ENCODE measurements at regions of chr3 and their contacts with region 1.

Region 1: DNA sequence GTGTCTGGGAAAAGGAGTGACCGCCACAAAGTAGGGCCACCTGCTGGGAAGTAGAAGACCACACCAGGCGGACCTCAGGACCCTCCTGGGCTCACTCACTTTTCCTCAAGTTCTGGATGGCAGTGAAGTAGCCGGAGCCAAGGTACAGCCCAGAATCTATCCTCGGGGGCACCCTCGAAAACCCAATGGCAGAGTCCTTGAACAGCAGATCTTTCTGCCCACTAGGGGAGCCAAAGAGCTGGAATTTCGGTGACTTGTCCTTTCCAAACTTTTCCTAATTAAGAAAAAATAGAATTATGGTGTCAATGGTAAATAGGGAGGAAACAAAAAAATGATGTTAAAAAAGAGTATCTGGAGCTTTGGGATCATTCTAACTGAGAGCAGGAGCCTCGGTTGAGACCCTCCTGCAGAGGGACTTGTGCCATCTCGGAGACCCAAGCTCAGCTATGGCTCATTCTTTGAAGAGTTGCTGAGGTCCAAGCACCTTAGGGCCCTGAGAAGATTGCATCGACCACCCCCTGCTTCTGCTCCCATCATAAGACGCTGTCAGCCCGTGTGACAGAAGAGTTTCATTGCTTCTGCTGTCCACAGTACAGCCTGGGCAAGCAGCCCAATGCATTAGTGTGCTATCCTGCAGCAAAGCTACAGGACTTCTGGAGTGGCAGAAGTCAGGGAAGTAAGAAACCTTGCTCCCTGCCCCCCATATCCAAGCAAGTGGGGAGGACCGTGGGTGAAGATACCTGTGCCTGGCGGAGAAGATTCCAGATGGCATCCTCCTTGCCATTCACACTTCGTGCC is 14.8 kb downstream of the LTF start:
- DNase-seq: peak; percentile 50
- ATAC-seq: peak; percentile 64
- H3K4me3 Mint-ChIP-seq: no peak overlapping the region
- H3K27ac Mint-ChIP-seq: no peak overlapping the region
- H3K4me1 Mint-ChIP-seq: no peaks in the 10 kb centered on the region
- H3K27me3 Mint-ChIP-seq: no peaks in the 10 kb centered on the region; the same call in 1 of the 2 replicates
- CTCF ChIP-seq: peak; percentile 73

Region 2: DNA sequence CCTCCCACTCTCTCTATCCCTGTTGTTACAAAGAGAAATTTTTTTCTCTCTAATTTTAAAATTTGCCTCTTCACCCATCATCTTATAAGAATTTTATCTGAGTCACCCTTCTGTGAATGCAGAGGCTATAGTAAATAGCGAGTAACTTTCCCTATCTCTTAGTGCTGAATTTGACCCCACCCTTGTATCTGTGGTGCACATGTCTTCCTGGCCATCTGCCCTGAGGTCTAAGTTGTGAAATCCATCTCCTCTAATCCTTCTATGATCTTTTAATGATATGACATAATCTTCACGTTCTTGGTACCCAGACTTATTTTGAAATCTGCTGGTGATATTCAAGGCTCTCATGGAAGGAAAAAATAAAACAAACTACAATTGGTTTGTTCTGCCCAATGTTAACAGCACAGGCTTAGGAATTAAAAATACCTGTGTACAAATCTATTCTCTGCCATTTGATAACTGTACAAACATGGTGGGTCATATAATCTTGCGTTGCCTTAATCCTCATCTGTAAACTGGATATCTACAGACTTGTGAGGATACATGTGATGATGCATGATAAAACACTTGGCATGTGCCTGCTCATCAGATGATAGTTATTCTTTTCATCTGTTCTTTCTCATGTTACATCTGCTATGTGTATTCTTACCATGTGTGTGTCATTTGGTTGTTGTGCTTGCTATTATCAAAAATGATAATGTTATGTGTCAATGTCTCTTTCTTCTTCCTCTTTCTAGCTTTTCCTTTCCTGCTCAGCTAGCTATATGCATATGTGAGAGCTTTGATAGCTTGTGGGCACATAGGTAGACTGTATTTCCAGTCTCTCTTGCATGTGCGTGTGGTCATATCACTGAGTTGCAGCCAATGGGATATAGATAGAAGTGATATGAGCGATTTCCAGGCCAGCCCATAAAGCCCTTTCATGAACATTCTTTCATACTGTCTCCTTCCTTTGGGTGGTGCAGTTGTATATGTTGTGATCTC is 221.4 kb before region 1 on chr3:
- CTCF ChIA-PET with region 1: no interaction called
- POLR2A ChIA-PET with region 1: no interaction called
- DNase-seq: no peak
- ATAC-seq: no peak
- H3K4me3 Mint-ChIP-seq: no peak overlapping the region
- H3K27ac Mint-ChIP-seq: no peak overlapping the region
- H3K4me1 Mint-ChIP-seq: no peaks in the 10 kb centered on the region
- H3K27me3 Mint-ChIP-seq: no peaks in the 10 kb centered on the region; the same call in 1 of the 2 replicates
- CTCF ChIP-seq: no peak

Region 3: DNA sequence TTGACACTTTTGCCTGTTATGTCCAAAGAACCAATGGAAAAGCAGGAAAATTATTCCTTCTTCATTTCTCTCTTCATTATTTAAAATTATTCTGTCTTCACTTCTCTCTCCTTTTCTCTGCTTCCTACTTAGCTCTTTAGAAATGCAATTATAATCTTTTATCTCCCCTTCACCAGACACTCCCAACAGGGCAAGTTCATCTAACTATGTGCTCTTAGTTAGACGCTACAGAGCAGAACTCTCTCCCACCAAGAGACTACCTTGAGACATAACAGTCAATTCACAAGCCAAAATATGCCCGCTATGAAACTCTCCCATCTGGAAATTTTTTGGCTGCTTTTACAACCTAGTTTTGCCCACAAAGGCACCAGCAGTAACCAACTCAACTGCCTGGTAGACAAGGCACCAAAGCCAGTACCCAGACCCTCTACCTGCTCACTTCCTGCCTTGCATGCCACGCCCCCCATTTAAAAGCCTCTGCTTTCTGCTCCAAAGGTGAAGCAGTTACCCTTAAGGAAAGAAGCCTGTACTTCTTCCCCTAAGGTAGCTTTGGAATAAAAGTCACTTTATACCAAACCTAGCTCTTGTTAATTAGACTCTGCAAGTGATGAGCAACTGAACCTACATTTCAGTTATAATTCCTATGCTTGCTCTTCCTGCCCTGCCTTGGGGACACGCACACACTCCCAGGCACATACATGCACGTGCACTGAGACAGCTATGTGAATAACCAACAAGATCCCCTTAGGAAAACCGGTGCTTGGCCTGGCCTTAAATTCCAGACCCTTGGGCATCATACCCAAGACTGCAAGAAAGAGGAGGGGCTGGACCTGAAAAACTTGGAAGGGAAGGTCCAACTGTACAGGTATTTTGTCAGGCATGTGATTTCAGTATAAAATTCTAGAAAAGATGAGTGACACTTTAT is 14.6 kb before region 1 on chr3:
- CTCF ChIA-PET with region 1: interaction called, 10 read pairs
- POLR2A ChIA-PET with region 1: no interaction called
- DNase-seq: no peak
- ATAC-seq: peak; percentile 34; the same call in 1 of the 2 replicates
- H3K4me3 Mint-ChIP-seq: no peak overlapping the region
- H3K27ac Mint-ChIP-seq: no peak overlapping the region
- H3K4me1 Mint-ChIP-seq: peaks cover 3% of the 10 kb centered on the region
- H3K27me3 Mint-ChIP-seq: peaks cover 6% of the 10 kb centered on the region; the same call in 1 of the 2 replicates
- CTCF ChIP-seq: no peak

Region 4: GRCh38 chr3:46462111-46462510 is 12.2 kb after region 1 on chr3:
- CTCF ChIA-PET with region 1: interaction called, 65 read pairs
- POLR2A ChIA-PET with region 1: no interaction called
- DNase-seq: no peak
- ATAC-seq: peak; percentile 63
- H3K4me3 Mint-ChIP-seq: no peak overlapping the region
- H3K27ac Mint-ChIP-seq: no peak overlapping the region
- H3K4me1 Mint-ChIP-seq: peaks cover 3% of the 10 kb centered on the region
- H3K27me3 Mint-ChIP-seq: peaks cover 42% of the 10 kb centered on the region
- CTCF ChIP-seq: no peak

Region 5: GRCh38 chr3:46472736-46473135 is 22.8 kb after region 1 on chr3:
- CTCF ChIA-PET with region 1: interaction called, 10 read pairs
- POLR2A ChIA-PET with region 1: no interaction called
- DNase-seq: no peak
- ATAC-seq: no peak
- H3K4me3 Mint-ChIP-seq: no peak overlapping the region
- H3K27ac Mint-ChIP-seq: no peak overlapping the region
- H3K4me1 Mint-ChIP-seq: no peaks in the 10 kb centered on the region
- H3K27me3 Mint-ChIP-seq: peaks cover 9% of the 10 kb centered on the region
- CTCF ChIP-seq: no peak